ENCODE measurements at regions of chr1 and their contacts with region 1.

Region 1: DNA sequence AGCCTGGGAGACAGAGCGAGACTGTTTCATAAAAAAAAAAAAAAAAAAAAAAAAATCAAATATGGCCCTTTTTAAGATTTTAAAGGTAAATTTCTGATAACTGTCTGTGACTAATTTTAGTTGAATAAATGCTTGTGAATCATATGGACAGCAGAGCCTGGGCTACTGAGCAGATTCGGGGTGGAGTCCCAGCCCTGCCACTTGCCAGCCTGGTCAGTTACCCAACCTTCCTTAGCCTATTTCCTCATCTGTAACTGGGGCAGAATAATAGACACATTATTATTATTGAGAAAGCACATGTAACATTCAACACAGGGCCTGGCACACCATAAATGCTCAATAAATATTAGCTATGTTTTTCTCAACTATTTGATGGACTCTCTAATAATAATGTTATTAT is 11.2 kb upstream of the H3-3A start:
- DNase-seq: no peak
- H3K4me3 ChIP-seq: no peak overlapping the region
- H3K27ac ChIP-seq: no peak overlapping the region
- H3K4me1 ChIP-seq: no peaks in the 10 kb centered on the region
- H3K27me3 ChIP-seq: no peaks in the 10 kb centered on the region
- CTCF ChIP-seq: no peak
- POLR2A ChIP-seq: no peak

Region 2: DNA sequence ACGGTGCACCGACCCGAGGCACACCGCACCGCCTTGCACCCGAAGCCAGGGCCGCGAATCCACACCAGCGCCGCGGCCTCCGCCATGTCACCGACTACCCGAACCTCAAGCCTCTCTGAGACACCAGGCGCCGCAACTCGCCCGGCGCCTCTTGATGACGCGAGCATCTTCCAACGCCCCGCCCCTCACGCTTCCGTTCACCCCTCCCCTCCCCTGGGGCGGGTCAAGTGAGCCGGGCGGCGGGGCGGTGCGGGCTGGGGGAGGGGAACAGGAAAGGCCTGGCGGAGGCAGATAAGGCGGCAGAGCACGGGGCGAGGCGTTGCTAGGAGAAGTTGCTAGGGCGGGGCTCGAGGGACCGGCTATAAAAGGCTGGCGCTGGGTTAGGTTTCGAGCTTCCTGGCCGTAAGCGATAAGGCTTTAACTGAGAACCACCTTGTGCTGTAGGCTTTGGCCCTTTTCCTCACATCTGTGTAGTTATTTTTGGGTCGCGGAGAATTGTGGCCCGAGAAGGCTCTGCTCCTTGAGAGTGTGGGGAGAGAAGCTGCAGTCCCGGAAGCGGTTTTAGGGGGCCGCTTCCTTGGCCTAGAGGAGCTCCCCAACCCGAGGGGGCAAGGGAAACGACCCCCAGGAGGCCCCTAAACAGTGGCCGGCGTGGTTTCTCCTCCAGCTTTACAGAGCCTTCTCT is 52.0 kb before region 1 on chr1 and contains the start of gene SDE2:
- intact Hi-C with region 1: loop called (anchors 10 kb)
- DNase-seq: peak; percentile 99
- H3K4me3 ChIP-seq: peak within 1 kb of the TSS; percentile 55 to 73 (median 67)
- H3K27ac ChIP-seq: peak within 1 kb of the TSS; percentile 94 to 98 (median 96)
- H3K4me1 ChIP-seq: peaks cover 18 to 26% of the 10 kb centered on the region in 2 donors
- H3K27me3 ChIP-seq: no peaks in the 10 kb centered on the region
- CTCF ChIP-seq: no peak
- POLR2A ChIP-seq: peak; percentile 79 to 98
- total RNA-seq, gene SDE2: 19.9 to 41.0 (median 27.3) TPM

Region 3: GRCh38 chr1:226083302-226084101 is 32.1 kb after region 1 on chr1:
- intact Hi-C with region 1: no loop called
- DNase-seq: peak; percentile 89 to 91
- H3K4me3 ChIP-seq: peak overlapping the region; percentile 47 to 89 (median 84)
- H3K27ac ChIP-seq: peak overlapping the region; percentile 62 to 82 (median 64)
- H3K4me1 ChIP-seq: peaks cover 0 to 5% of the 10 kb centered on the region in 2 donors
- H3K27me3 ChIP-seq: no peaks in the 10 kb centered on the region
- CTCF ChIP-seq: peak in 1 of 6 experiments; percentile 4
- POLR2A ChIP-seq: peak in 1 of 2 donors; percentile 75